ENCODE measurements at regions of chr3 and their contacts with region 1.

Region 1: DNA sequence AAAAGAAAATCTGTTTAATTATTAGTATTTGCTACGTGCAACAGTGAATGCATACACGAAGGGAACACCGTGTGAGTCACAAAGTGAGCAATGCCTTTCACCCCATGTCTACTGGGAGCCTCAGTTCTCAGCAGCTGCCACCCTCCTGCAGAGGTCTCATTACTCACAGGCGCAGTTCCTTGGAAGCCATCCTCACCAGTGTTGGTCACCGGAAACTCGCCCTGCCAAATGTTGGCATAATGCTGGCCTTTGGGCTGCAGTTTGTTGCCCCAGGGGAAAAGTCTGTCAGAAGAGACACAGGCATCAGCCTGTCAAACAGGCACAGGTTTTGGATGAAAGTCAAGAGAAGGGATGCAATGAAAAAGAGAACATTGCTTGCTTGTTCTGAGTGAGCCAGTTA is 50.1 kb downstream of the SUMF1 start:
- DNase-seq: peak; percentile 82 to 95
- H3K4me3 ChIP-seq: no peak overlapping the region
- H3K27ac ChIP-seq: peak overlapping the region; percentile 79 to 88
- H3K4me1 ChIP-seq: peaks cover 3 to 13% of the 10 kb centered on the region in 2 donors
- H3K27me3 ChIP-seq: no peaks in the 10 kb centered on the region
- CTCF ChIP-seq: peak in 1 of 3 experiments; percentile 5

Region 2: DNA sequence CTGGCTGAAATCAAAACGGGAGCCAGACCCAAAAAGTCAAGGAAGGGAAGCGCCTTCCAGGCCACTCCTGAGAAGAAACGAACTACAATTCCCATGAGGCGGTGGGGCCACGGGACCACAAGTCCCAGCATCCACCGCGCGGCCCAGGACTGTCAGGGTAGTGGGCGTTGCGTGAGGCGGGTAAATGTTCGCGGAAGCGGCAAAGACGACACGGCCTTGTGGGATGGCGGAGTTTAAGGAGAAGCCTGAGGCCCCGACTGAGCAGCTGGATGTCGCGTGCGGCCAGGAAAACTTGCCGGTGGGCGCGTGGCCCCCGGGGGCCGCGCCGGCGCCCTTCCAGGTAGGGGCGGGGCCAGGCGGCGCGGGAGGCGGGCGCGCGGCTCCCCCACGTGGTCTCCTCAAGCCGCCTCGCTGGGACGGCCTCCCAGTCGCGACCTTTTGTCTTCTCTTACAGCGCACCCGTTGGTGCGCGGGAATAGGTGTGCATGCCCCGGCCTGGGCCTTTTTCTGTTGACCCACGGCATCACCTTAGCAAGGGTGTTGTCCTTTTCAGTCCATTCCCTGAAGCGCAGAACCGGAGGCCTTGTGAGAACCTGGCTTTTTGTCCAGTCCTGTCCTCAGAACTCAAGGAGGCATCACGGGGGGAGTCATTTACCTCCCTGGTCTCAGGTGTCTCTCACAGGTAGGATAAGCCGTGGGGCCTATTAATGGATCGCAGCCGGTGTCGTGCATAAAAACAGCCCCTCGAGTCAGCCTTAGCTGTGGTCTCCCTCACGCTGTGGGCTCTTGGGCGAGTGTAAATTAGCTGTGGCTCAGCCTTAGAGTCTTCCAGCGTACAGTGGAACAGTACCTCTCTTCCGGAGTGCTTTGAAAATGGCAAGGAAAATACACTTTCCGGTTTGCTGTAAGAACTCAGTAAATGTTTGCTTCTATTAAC is 113.5 kb before region 1 on chr3 and contains the start of gene SETMAR:
- intact Hi-C with region 1: loop called (anchors 5 kb)
- DNase-seq: peak; percentile 75 to 97
- H3K4me3 ChIP-seq: peak within 1 kb of the TSS; percentile 90 to 92
- H3K27ac ChIP-seq: peak within 1 kb of the TSS; percentile 91 to 96
- H3K4me1 ChIP-seq: peaks cover 8 to 42% of the 10 kb centered on the region in 2 donors
- H3K27me3 ChIP-seq: no peaks in the 10 kb centered on the region
- CTCF ChIP-seq: no peak
- total RNA-seq, gene SETMAR: 13.6 TPM

Region 3: DNA sequence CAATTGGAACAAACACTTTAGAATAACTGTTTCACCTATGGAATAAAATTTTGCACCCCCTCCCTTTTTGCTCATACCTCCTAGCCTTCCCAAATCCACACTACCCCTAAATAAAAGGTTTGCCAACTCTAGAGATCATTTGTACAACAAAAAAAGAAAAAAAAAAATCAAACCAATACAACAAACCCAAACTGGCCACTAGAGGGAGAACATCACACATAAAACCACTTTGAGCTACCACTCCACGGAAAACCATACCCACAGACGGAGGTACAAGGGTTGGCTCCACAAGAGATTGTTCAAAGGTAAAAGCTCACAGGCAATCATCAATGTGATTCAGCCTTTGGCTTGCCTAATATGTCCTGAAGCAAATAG is 66.2 kb before region 1 on chr3:
- intact Hi-C with region 1: loop called (anchors 5 kb)
- DNase-seq: peak in 1 of 2 donors; percentile 68
- H3K4me3 ChIP-seq: peak overlapping the region; percentile 45 to 60
- H3K27ac ChIP-seq: peak overlapping the region; percentile 88 to 92
- H3K4me1 ChIP-seq: peaks cover 0 to 3% of the 10 kb centered on the region in 2 donors
- H3K27me3 ChIP-seq: no peaks in the 10 kb centered on the region
- CTCF ChIP-seq: peak; percentile 58 to 76 (median 67)

Region 4: DNA sequence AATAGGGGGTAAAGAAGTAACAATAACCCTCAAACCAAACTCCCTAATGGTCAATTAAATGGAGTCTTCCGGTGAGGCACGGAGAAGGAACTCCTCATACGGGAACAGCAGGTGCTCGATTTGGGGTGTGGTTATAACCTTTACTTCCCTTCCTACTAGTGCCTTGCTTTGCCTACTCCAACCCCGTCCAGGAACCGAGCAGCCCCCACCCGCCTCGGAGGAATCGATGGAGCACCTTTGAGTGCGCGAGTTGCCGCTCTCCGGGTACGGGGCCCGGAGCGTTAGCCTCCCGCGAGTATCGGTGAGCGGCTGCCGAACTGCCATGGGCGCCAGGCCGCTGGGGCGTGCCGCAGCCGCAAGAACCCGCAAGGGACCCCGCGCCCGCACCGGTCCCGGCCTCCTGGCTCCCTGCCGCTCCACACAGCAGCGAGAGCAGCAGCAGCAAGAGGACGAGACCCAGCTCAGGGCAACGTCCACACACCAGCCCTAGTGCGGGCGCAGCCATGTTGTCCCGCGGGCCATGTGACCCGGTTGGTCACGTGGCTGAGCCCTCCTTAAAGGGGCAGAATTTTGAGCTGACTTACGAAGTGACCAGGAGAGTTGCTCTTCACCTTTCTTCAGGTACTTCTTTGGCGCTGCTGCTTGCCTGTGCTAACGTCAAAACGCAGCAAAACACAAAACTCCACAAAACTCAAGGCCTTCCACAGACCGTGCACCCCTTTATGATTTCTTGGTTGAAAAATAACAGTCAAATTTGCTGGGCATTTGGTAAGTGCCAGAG is 50.0 kb after region 1 on chr3 and contains the start of gene SUMF1:
- intact Hi-C with region 1: loop called (anchors 2 kb)
- DNase-seq: peak; percentile 46 to 90
- H3K4me3 ChIP-seq: peak within 1 kb of the TSS; percentile 70
- H3K27ac ChIP-seq: peak within 1 kb of the TSS; percentile 48 to 75
- H3K4me1 ChIP-seq: peaks cover 4 to 11% of the 10 kb centered on the region in 2 donors
- H3K27me3 ChIP-seq: no peaks in the 10 kb centered on the region
- CTCF ChIP-seq: no peak
- total RNA-seq, gene SUMF1: 98.4 TPM

Region 5: GRCh38 chr3:4474683-4475490 is 57.9 kb after region 1 on chr3:
- intact Hi-C with region 1: loop called (anchors 2 kb)
- DNase-seq: peak; percentile 56 to 86
- H3K4me3 ChIP-seq: peak overlapping the region in 1 of 2 donors; percentile 37
- H3K27ac ChIP-seq: peak overlapping the region; percentile 59 to 69
- H3K4me1 ChIP-seq: peaks cover 0 to 10% of the 10 kb centered on the region in 2 donors
- H3K27me3 ChIP-seq: no peaks in the 10 kb centered on the region
- CTCF ChIP-seq: no peak

Region 6: GRCh38 chr3:4584456-4585249 is 167.7 kb after region 1 on chr3:
- intact Hi-C with region 1: loop called (anchors 2 kb)
- DNase-seq: no peak
- H3K4me3 ChIP-seq: peak overlapping the region; percentile 43 to 57
- H3K27ac ChIP-seq: peak overlapping the region; percentile 84 to 86
- H3K4me1 ChIP-seq: peaks cover 0 to 41% of the 10 kb centered on the region in 2 donors
- H3K27me3 ChIP-seq: no peaks in the 10 kb centered on the region
- CTCF ChIP-seq: peak in 2 of 3 experiments; percentile 39 to 55

Region 7: DNA sequence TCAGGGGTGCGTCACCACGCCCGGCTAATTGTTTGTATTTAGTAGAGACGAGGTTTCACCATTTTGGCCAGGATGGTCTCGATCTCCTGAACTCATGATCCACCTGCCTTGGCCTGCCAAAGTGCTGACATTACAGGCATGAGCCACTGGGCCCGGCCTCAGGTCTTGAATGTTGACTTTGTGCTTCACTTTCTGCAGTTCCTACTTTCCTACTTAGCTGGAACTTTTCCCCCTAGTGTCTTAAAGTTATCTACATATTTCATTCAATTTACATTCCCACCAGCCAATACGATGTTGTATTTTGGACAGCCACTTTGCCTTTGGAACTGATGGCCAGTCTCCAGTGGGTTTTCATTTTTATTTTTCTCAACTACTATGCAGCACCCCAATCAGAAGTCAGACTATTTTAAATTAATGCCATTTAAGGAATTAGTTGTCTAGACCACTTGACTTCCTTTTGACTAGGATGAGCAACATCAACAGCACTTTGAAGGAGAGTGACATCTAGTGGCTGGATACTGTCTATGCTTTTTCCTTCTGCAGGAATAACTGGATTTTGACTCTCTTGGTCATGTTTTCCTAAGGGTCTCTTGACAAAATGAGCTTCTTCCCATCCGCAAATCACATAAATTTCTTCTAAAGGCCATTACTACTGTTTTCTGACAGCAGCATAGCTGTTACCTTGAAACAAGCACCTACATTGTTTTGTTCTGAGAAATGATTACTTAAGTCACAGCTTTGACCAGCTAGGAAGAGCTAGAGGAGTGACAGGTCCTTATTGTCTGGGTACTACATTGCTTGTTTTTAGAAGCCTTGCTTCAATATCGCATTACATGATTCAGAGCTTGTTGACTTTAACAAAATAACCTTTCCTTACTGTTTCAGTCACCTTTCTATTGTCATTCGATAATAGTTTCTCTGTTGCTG is 216.4 kb after region 1 on chr3:
- intact Hi-C with region 1: no loop called
- DNase-seq: no peak
- H3K4me3 ChIP-seq: no peak overlapping the region
- H3K27ac ChIP-seq: peak overlapping the region in 1 of 2 donors; percentile 40
- H3K4me1 ChIP-seq: no peaks in the 10 kb centered on the region
- H3K27me3 ChIP-seq: no peaks in the 10 kb centered on the region
- CTCF ChIP-seq: peak; percentile 73 to 81 (median 78)

Measured in ascending aorta (tissue), 2 donors.